Aorta (tissue), 5 donors: ENCODE measurements at regions of chr1 and their contacts with region 1.

Region 1: DNA sequence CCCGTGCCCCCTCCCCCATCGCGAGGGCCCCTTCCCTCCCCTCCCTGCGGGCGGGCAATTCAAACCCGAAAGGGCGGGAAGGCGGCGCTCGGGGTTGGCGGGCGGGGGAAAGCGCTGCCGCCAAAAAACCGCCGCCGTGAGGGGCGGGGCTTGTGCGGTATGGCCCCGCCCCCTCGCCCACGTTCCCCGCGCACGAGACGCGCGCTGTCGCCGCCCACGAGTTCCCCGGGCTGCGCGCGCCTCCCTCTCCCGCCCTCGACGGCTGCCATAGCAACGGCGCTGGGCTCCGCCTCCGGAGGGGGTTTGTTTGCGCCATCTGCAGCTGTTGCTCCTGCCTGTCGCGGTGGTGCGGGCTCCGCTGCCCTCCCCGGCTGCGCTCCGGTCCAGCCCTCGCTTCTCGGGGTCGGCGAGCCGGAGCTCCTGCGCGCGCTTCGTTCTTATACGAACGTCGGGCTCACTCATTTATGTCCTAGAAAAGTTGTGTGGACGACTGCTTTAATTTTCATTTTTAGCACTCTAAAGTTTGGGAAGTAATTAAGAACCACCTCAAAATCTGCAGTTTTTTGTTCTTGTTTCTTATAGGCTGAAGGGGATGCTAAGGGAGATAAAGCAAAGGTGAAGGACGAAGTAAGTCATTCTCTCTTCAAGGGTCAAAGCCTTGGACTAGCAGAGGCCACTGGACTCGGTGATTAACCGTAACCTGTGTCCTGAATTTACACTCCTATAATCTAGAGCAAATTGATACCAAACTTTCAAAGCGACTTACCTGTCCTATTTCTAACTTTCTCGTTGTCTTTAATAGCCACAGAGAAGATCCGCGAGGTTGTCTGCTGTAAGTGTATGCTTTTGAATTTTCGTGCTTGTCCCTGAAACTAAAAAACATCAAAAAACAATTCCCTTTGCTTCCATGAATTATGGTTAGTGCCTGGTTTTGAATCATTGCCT is 933 bp downstream of the HMGN2 start:
- DNase-seq: peak; percentile 98 to 99
- ATAC-seq: peak; percentile 96
- H3K4me3 ChIP-seq: peak overlapping the region; percentile 69 to 94
- H3K27ac ChIP-seq: peak overlapping the region in 1 of 2 donors; percentile 77
- H3K4me1 ChIP-seq: no peaks in the 10 kb centered on the region
- H3K27me3 ChIP-seq: no peaks in the 10 kb centered on the region

Region 2: GRCh38 chr1:26191739-26192138 is 281.4 kb before region 1 on chr1:
- intact Hi-C with region 1: no loop called
- DNase-seq: no peak
- ATAC-seq: no peak
- H3K4me3 ChIP-seq: no peak overlapping the region
- H3K27ac ChIP-seq: no peak overlapping the region
- H3K4me1 ChIP-seq: no peaks in the 10 kb centered on the region
- H3K27me3 ChIP-seq: no peaks in the 10 kb centered on the region

Region 3: DNA sequence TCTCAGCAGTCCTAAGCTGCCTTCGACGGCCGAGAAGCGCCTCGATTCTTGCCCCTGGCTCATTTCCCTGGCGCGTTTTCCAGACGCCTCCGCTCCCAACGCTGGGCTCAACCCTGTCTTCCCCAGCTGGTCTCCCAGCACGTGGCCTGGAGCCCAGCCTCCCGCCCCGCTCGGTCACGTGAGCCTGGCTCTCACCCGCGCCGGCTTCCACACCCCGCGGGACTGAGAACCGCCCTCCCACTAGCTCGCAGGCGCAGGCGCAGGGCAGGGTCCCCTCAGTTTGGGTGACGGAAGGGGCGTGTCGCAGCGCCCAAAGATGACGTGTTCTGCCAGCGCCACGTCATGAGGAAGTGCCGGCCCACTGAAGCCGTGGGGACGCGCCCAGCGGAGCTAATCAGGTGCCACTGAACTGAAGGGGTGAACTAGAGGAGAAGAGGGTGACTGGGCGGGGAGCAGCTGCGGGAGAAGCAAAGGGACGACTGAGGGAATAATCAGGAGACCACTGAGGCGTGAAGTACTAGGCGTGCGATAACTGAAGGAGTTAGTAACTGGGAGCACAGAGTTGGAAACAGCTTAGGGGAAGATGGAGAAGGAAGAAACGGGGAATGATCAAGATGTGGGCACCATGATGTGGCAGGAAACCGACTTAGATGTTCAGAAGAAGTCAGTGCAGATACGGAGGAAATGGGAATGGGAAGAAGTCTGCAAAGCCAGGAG is 41.0 kb before region 1 on chr1 and contains the start of gene DHDDS:
- intact Hi-C with region 1: loop called in 1 of 2 experiments (anchors 5 kb)
- DNase-seq: peak; percentile 99
- ATAC-seq: peak; percentile 100
- H3K4me3 ChIP-seq: peak within 1 kb of the TSS; percentile 61 to 82
- H3K27ac ChIP-seq: peak within 1 kb of the TSS in 1 of 2 donors; percentile 42
- H3K4me1 ChIP-seq: peaks cover 0 to 2% of the 10 kb centered on the region in 2 donors
- H3K27me3 ChIP-seq: no peaks in the 10 kb centered on the region
- total RNA-seq, gene DHDDS: 42.3 to 46.4 TPM

Region 4: DNA sequence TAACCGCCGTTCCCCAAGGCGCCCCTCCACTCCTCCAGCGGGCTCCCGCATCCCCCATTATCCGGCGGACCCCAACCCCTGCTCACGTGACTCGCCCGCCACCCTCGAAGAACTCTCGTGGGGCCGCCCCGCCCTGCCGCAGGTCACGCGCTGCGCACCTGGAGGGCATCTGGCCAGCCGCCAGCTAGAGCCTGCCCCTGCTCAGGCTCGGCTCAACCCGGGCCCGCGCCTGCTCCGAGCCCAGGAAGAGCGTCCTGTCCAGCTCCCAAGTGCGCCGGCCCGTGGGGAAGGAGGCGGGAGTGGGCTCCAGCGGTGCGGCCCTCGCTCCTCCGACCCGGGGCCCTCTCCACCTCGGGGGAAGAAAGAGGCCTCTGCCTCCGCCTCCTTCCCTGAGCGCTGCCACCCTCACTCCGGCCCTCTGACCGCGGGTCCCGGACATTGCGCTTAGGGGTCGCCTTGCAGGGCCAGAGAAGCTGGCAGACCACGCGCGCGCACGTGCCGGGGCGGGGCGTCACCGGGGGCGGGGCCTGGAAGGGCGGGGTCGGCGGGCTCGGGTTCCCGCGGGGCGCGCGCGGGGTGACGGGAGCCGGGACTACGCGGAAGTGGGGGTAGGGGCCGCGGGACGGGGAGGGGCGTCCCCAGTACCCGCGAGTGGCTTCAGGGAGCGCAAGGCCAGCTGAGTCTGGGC is 27.5 kb after region 1 on chr1:
- intact Hi-C with region 1: loop called in 1 of 2 experiments (anchors 1 kb)
- DNase-seq: peak; percentile 93 to 97
- ATAC-seq: peak; percentile 96
- H3K4me3 ChIP-seq: peak overlapping the region; percentile 27 to 52
- H3K27ac ChIP-seq: peak overlapping the region in 1 of 2 donors; percentile 34
- H3K4me1 ChIP-seq: no peaks in the 10 kb centered on the region
- H3K27me3 ChIP-seq: no peaks in the 10 kb centered on the region